Left colon (tissue), 2 donors: ENCODE measurements at regions of chr6 and their contacts with region 1.

Region 1: GRCh38 chr6:13873285-13874190 is 51.2 kb upstream of the RNF182 start:
- DNase-seq: peak; percentile 54 to 83
- ATAC-seq: peak; percentile 88

Region 2: GRCh38 chr6:13795041-13795750 is 78.3 kb before region 1 on chr6:
- intact Hi-C with region 1: loop called in 1 of 2 experiments (anchors 10 kb)
- DNase-seq: peak; percentile 77 to 90
- ATAC-seq: peak; percentile 89